ENCODE measurements at regions of chr7 and their contacts with region 1.

Region 1: GRCh38 chr7:143380255-143380645 is 895 bp upstream of the ZYX start:
- DNase-seq: peak; percentile 94
- H3K4me3 ChIP-seq: peak overlapping the region; percentile 82 to 100 (median 91)
- H3K27ac ChIP-seq: peak overlapping the region; percentile 97 to 100 (median 100)
- H3K4me1 ChIP-seq: peaks cover 0 to 76% (median 65%) of the 10 kb centered on the region in 4 donors
- H3K27me3 ChIP-seq: no peaks in the 10 kb centered on the region
- CTCF ChIP-seq: peak; percentile 83 to 90 (median 86)
- EP300 ChIP-seq: no peak
- POLR2A ChIP-seq: no peak

Region 2: DNA sequence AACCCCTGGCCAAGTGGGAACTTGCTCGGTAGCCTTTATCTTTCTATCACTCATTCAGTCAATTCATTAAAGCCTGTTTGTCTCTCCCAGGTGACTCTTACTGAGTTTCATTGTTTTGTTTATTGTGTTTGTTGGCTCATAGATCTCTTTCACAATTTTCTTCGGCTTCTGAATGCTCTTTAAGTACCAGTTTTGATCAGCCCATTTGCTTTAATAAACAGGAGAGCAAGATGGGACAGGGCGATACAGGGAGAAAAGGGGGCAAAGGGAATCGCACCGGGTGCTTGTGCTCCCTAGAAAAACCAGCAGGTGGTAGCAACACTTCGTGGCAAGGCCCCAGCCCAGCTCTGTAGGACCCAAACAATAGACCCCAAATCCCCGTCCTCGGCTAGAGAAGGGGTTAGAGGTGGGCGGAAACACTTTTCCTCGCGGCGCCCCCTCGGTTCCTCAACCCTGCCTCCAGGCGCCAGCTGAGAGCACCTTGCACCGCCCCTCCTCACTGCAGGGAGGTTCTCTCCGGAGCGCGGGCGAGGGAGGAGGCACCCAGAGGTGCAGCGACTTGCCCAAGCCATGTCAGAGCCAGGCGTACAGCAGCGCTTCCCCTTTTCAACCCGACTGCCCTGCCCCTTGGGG is 526.4 kb before region 1 on chr7:
- intact Hi-C with region 1: loop called (anchors 10 kb)
- DNase-seq: peak; percentile 82
- H3K4me3 ChIP-seq: peak overlapping the region; percentile 55 to 76 (median 66)
- H3K27ac ChIP-seq: peak overlapping the region; percentile 69 to 81 (median 71)
- H3K4me1 ChIP-seq: peaks cover 0 to 21% (median 17%) of the 10 kb centered on the region in 4 donors
- H3K27me3 ChIP-seq: no peaks in the 10 kb centered on the region
- CTCF ChIP-seq: peak; percentile 66 to 88 (median 76)
- EP300 ChIP-seq: no peak
- POLR2A ChIP-seq: no peak

Region 3: GRCh38 chr7:143263266-143264195 is 116.7 kb before region 1 on chr7 and contains the start of gene GSTK1:
- intact Hi-C with region 1: loop called (anchors 5 kb)
- DNase-seq: peak; percentile 90
- H3K4me3 ChIP-seq: peak within 1 kb of the TSS; percentile 79 to 83 (median 80)
- H3K27ac ChIP-seq: peak within 1 kb of the TSS; percentile 82 to 89 (median 87)
- H3K4me1 ChIP-seq: peaks cover 0 to 28% (median 20%) of the 10 kb centered on the region in 4 donors
- H3K27me3 ChIP-seq: no peaks in the 10 kb centered on the region
- CTCF ChIP-seq: no peak
- EP300 ChIP-seq: no peak
- POLR2A ChIP-seq: peak; percentile 48 to 87
- total RNA-seq, gene GSTK1: 111 to 168 (median 134) TPM

Region 4: DNA sequence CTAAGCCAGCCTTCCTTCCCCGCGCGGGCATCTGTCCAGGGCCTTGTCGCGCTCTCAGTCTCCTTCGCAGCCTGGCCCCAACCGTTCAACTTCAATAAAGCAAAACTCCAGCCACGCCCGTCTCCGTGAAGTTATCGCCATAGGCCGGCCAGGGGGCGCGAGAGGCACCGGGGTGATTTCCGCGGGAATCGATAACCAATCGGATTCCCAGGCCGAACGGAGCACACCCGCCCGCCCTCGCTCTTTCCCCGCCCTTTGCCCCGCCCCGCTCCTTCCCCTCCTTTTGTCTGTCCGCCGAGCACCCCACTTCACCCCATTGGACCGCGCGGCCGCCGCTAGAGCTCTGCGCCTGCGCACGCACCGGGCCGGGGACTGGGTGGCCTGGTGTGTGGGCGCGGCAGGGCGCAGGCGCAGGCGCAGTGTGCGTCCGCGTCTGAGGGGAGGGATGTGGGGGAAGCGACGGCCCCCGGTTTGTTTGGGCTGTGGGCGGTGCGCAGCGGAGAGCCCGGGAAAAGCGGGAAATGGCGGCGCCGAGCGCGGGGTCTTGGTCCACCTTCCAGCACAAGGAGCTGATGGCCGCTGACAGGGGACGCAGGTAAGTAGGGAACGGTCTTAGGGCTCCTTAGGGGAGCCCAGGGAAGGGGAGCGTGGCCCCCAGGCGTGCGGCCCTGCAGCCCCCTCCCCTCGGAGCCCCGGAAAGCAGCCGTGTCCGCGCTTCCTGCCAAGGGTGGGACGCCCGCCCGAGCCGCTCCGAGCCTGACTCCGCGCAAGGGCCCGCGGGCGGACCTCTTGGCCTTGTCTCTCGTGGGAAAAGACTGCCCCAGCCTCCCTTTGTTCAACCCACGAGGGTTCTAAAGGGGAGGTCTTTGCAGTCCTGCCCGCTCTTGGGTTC is 92.1 kb before region 1 on chr7 and contains the start of gene CASP2:
- intact Hi-C with region 1: loop called (anchors 5 kb)
- DNase-seq: peak; percentile 99
- H3K4me3 ChIP-seq: peak within 1 kb of the TSS; percentile 88 to 99 (median 94)
- H3K27ac ChIP-seq: peak within 1 kb of the TSS; percentile 91 to 95 (median 94)
- H3K4me1 ChIP-seq: peaks cover 0 to 32% (median 27%) of the 10 kb centered on the region in 4 donors
- H3K27me3 ChIP-seq: no peaks in the 10 kb centered on the region
- CTCF ChIP-seq: peak in 2 of 4 experiments; percentile 13 to 27
- EP300 ChIP-seq: no peak
- POLR2A ChIP-seq: peak in 1 of 2 donors; percentile 62
- total RNA-seq, gene CASP2: 7.1 to 14.4 (median 7.8) TPM

Region 5: DNA sequence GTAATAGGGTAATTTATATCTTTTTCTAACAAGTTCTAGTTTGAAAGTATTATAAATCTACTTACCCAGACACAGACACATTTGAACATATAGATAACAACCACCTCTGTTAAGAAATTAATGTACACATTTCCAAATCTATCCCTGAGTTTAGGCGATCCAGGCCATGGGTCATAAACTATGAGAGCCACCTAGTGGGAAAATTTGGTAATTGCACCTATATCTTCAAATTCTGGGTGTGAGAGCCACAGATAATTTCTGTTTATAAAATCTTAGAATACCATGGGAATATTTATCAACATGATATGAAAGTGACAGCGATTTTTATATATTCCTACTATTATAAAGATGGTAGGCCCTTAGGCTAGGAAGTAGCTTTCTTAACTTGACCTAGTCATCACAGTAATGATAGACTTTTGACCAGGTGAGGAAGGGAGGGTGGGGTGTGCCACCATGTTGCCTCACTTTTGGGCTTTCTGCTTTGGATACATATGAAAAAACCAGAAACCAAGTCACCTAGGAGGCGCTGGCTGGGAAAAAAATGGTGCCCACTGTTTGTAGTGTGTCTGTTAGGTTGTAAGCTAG is 36.4 kb after region 1 on chr7:
- intact Hi-C with region 1: loop called (anchors 5 kb)
- DNase-seq: no peak
- H3K4me3 ChIP-seq: no peak overlapping the region
- H3K27ac ChIP-seq: no peak overlapping the region
- H3K4me1 ChIP-seq: peaks cover 0 to 8% (median 0%) of the 10 kb centered on the region in 4 donors
- H3K27me3 ChIP-seq: no peaks in the 10 kb centered on the region
- CTCF ChIP-seq: peak; percentile 33 to 70 (median 62)
- EP300 ChIP-seq: no peak
- POLR2A ChIP-seq: no peak

Region 6: GRCh38 chr7:143901668-143902331 is 521.5 kb after region 1 on chr7 and contains the start of gene TCAF1:
- intact Hi-C with region 1: loop called (anchors 10 kb)
- DNase-seq: peak; percentile 98
- H3K4me3 ChIP-seq: peak within 1 kb of the TSS; percentile 57 to 77 (median 72)
- H3K27ac ChIP-seq: peak within 1 kb of the TSS; percentile 89 to 96 (median 94)
- H3K4me1 ChIP-seq: peaks cover 0 to 28% (median 22%) of the 10 kb centered on the region in 4 donors
- H3K27me3 ChIP-seq: no peaks in the 10 kb centered on the region
- CTCF ChIP-seq: peak in 2 of 4 experiments; percentile 12 to 14
- EP300 ChIP-seq: no peak
- POLR2A ChIP-seq: peak; percentile 66
- total RNA-seq, gene TCAF1: 40.8 to 56.8 (median 48.2) TPM